GM12878 (cell line): ENCODE measurements at regions of chr10 and their contacts with region 1.

Region 1: DNA sequence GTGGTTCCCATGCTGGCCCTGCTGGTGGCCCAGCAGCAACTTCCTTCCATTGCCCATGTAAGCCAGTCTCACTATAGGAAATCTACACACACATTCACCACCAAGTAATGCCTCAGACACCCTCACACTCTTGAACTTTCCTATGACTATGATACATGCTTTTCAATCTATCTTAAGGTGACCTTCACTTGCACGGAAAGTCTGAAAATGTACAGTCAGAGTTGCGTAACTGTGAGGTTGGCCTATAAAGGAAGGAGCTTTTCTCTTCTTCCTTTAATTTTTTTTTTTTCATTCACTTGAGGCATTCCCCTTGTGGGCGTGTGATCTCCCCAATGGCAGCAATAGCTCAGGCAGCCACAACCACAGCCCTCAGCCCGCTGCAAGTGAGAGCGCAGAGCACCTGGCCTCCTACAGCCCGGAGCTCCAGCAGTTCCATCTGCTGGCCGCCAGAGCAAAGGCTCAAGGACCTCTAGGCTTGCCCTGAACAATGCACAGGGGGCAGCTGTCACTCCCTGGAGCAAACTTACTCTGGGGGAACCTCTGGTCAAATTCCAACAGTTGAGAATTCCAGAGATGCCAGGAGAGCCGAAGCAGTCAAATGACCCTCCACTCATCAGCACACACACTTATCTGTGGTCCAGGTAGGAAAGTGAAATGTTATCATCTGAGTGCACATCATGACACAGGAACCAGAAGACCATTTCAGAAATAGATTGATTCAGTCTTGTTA is 123.1 kb upstream of the ADO start:
- DNase-seq: peak; percentile 90
- ATAC-seq: peak; percentile 98
- H3K4me3 ChIP-seq: no peak overlapping the region
- H3K27ac ChIP-seq: peak overlapping the region; percentile 65
- H3K4me1 ChIP-seq: peaks cover 33% of the 10 kb centered on the region
- H3K27me3 ChIP-seq: no peaks in the 10 kb centered on the region
- CTCF ChIP-seq: peak; percentile 71 to 82 (median 77)
- EP300 ChIP-seq: peak; percentile 91 to 96
- POLR2A ChIP-seq: no peak
- RAD21 ChIP-seq: peak; percentile 82

Region 2: GRCh38 chr10:62384057-62384446 is 297.3 kb before region 1 on chr10:
- CTCF ChIA-PET with region 1: no interaction called
- POLR2A ChIA-PET with region 1: no interaction called
- RAD21 ChIA-PET with region 1: no interaction called
- SMC1A ChIA-PET with region 1: no interaction called
- in situ Hi-C with region 1: no loop called
- intact Hi-C with region 1: no loop called
- DNase-seq: peak; percentile 5
- ATAC-seq: peak; percentile 91
- H3K4me3 ChIP-seq: no peak overlapping the region
- H3K27ac ChIP-seq: no peak overlapping the region
- H3K4me1 ChIP-seq: no peaks in the 10 kb centered on the region
- H3K27me3 ChIP-seq: no peaks in the 10 kb centered on the region
- CTCF ChIP-seq: no peak
- EP300 ChIP-seq: no peak
- POLR2A ChIP-seq: no peak
- RAD21 ChIP-seq: no peak

Region 3: GRCh38 chr10:62594093-62594520 is 87.3 kb before region 1 on chr10:
- CTCF ChIA-PET with region 1: interaction called, 3 read pairs
- POLR2A ChIA-PET with region 1: no interaction called
- RAD21 ChIA-PET with region 1: interaction called, 12 read pairs
- SMC1A ChIA-PET with region 1: interaction called, 17 read pairs
- in situ Hi-C with region 1: no loop called
- intact Hi-C with region 1: no loop called
- DNase-seq: peak; percentile 30
- ATAC-seq: peak; percentile 94
- H3K4me3 ChIP-seq: no peak overlapping the region
- H3K27ac ChIP-seq: no peak overlapping the region
- H3K4me1 ChIP-seq: peaks cover 7% of the 10 kb centered on the region
- H3K27me3 ChIP-seq: no peaks in the 10 kb centered on the region
- CTCF ChIP-seq: peak; percentile 90 to 97 (median 95)
- EP300 ChIP-seq: no peak
- POLR2A ChIP-seq: no peak
- RAD21 ChIP-seq: peak; percentile 100

Region 4: GRCh38 chr10:62632071-62632809 is 49.1 kb before region 1 on chr10:
- CTCF ChIA-PET with region 1: interaction called, 41 read pairs
- POLR2A ChIA-PET with region 1: interaction called, 6 read pairs
- RAD21 ChIA-PET with region 1: interaction called, 63 read pairs
- SMC1A ChIA-PET with region 1: interaction called, 124 read pairs
- in situ Hi-C with region 1: no loop called
- intact Hi-C with region 1: loop called (anchors 1 kb)
- DNase-seq: peak; percentile 80
- ATAC-seq: peak; percentile 85
- H3K4me3 ChIP-seq: 0 out of 2 replicates have a peak overlapping the region, but pooled peaks have one; percentile 1
- H3K27ac ChIP-seq: peak overlapping the region; percentile 71
- H3K4me1 ChIP-seq: peaks cover 56% of the 10 kb centered on the region
- H3K27me3 ChIP-seq: no peaks in the 10 kb centered on the region
- CTCF ChIP-seq: no peak
- EP300 ChIP-seq: peak; percentile 75 to 94
- POLR2A ChIP-seq: no peak
- RAD21 ChIP-seq: peak; percentile 29; the same call in 1 of the 2 replicates

Region 5: GRCh38 chr10:62661143-62661542 is 20.2 kb before region 1 on chr10:
- CTCF ChIA-PET with region 1: interaction called, 41 read pairs
- POLR2A ChIA-PET with region 1: interaction called, 24 read pairs
- RAD21 ChIA-PET with region 1: interaction called, 73 read pairs
- SMC1A ChIA-PET with region 1: interaction called, 85 read pairs
- in situ Hi-C with region 1: no loop called
- intact Hi-C with region 1: no loop called
- DNase-seq: no peak
- ATAC-seq: no peak
- H3K4me3 ChIP-seq: no peak overlapping the region
- H3K27ac ChIP-seq: no peak overlapping the region
- H3K4me1 ChIP-seq: peaks cover 7% of the 10 kb centered on the region; the same call in 1 of the 2 replicates
- H3K27me3 ChIP-seq: no peaks in the 10 kb centered on the region
- CTCF ChIP-seq: no peak
- EP300 ChIP-seq: no peak
- POLR2A ChIP-seq: no peak
- RAD21 ChIP-seq: no peak

Region 6: GRCh38 chr10:62726142-62726541 is 44.8 kb after region 1 on chr10:
- CTCF ChIA-PET with region 1: interaction called, 39 read pairs
- POLR2A ChIA-PET with region 1: interaction called, 29 read pairs
- RAD21 ChIA-PET with region 1: interaction called, 87 read pairs
- SMC1A ChIA-PET with region 1: interaction called, 104 read pairs
- in situ Hi-C with region 1: no loop called
- intact Hi-C with region 1: no loop called
- DNase-seq: no peak
- ATAC-seq: peak; percentile 97
- H3K4me3 ChIP-seq: no peak overlapping the region
- H3K27ac ChIP-seq: no peak overlapping the region
- H3K4me1 ChIP-seq: no peaks in the 10 kb centered on the region
- H3K27me3 ChIP-seq: no peaks in the 10 kb centered on the region
- CTCF ChIP-seq: no peak
- EP300 ChIP-seq: peak; percentile 63 to 69; a peak in 3 of 4 replicates
- POLR2A ChIP-seq: peak; percentile 36; the same call in 1 of the 2 replicates
- RAD21 ChIP-seq: peak; percentile 6; the same call in 1 of the 2 replicates

Region 7: GRCh38 chr10:62779487-62780248 is 98.3 kb after region 1 on chr10:
- CTCF ChIA-PET with region 1: interaction called, 6 read pairs
- POLR2A ChIA-PET with region 1: interaction called, 13 read pairs
- RAD21 ChIA-PET with region 1: interaction called, 25 read pairs
- SMC1A ChIA-PET with region 1: interaction called, 29 read pairs
- in situ Hi-C with region 1: no loop called
- intact Hi-C with region 1: no loop called
- DNase-seq: peak; percentile 84
- ATAC-seq: peak; percentile 96
- H3K4me3 ChIP-seq: no peak overlapping the region
- H3K27ac ChIP-seq: peak overlapping the region; percentile 75; the same call in 1 of the 2 replicates
- H3K4me1 ChIP-seq: peaks cover 23% of the 10 kb centered on the region
- H3K27me3 ChIP-seq: no peaks in the 10 kb centered on the region
- CTCF ChIP-seq: no peak
- EP300 ChIP-seq: peak; percentile 83 to 84
- POLR2A ChIP-seq: no peak
- RAD21 ChIP-seq: no peak

Region 8: DNA sequence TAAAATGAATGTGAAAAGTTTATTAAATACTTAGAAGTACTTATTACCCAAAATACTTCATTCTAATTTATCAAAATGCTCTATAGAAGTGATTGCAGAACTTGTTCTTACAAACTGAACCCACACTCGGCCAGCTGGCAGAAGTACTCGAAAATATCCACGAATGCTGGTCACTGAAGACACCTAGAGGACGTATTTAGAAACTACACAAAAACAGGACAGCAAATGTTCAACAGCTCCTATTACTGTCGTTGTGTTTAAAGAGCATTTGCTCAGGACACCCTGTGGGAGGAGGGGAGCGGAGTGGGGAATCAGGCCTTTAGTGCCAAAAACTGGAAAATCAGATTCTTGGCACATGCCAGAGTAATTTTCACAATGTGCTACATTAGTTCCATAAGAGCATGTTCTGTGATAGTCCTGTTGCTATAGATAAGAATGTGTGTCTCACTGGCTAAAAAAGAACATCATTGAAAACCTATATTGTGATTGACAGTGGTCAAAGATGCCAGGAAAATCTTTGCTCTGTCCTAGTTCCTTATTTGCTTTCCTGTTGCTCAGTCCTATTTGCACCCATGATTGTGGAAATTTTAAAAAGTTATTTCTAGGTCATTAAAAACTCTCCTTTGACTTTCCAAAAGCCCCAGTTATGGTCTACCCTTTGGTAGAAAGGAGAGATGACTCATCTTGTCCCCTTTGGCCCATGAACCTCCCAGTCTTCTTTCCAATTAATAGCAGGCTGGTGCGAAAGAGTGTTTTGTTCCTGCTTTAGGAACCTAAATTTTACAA is 402.7 kb after region 1 on chr10:
- CTCF ChIA-PET with region 1: no interaction called
- POLR2A ChIA-PET with region 1: no interaction called
- RAD21 ChIA-PET with region 1: no interaction called
- SMC1A ChIA-PET with region 1: interaction called, 5 read pairs
- in situ Hi-C with region 1: no loop called
- intact Hi-C with region 1: loop called (anchors 10 kb)
- DNase-seq: peak; percentile 38
- ATAC-seq: peak; percentile 94
- H3K4me3 ChIP-seq: no peak overlapping the region
- H3K27ac ChIP-seq: no peak overlapping the region
- H3K4me1 ChIP-seq: no peaks in the 10 kb centered on the region
- H3K27me3 ChIP-seq: no peaks in the 10 kb centered on the region; a peak in 1 of 4 replicates
- CTCF ChIP-seq: peak; percentile 63 to 84 (median 76)
- EP300 ChIP-seq: no peak
- POLR2A ChIP-seq: no peak
- RAD21 ChIP-seq: peak; percentile 99